GM12878 (cell line): ENCODE measurements at regions of chr1 and their contacts with region 1.

Region 1: DNA sequence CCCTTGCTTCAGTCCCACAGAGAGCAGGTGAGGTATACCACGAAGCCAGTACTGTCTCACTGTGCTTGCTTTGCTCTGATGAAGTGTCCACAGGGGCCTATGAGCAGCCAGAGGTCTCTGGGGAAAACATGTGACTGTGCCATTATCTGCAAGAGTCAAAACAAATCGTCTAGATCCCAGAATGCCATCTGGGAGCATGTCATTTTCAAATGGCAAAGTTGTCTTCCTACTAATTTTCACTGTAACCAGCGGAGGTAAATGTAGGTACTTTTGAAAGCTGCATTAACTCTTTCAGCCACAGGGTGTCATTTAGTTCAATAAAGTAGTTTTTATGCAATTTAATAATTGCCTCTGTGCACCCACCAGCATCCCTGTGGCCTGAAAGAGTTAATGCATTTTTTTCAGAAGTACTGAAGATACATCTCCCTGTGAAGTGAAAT is 173.6 kb upstream of the SGIP1 start:
- DNase-seq: no peak
- ATAC-seq: peak; percentile 51
- H3K4me3 ChIP-seq: no peak overlapping the region
- H3K27ac ChIP-seq: no peak overlapping the region
- H3K4me1 ChIP-seq: peaks cover 16% of the 10 kb centered on the region
- H3K27me3 ChIP-seq: no peaks in the 10 kb centered on the region
- CTCF ChIP-seq: peak; percentile 30 to 44 (median 37); a peak in 4 of 6 replicates
- EP300 ChIP-seq: no peak
- POLR2A ChIP-seq: no peak
- RAD21 ChIP-seq: peak; percentile 59

Region 2: DNA sequence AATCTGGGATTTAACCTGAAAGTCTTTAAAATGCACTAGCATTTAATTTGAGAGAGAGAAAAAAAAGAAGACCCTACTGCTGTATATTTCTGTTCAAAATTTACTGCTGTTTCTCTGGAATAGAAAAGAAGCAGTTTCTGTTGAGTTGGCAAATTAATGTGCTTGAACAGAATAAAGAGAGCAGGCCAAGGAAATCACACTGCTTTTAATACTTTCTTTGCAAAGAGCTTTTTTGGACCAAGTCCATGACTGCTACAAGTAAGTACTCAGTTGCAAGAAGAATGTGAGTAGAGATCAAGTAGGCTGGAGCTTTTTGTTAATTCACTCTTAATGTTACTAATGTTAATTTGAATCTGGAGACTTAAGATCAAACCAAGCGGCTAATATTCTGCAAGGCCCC is 162.5 kb before region 1 on chr1:
- CTCF ChIA-PET with region 1: no interaction called
- POLR2A ChIA-PET with region 1: no interaction called
- RAD21 ChIA-PET with region 1: no interaction called
- SMC1A ChIA-PET with region 1: no interaction called
- in situ Hi-C with region 1: no loop called
- intact Hi-C with region 1: no loop called
- DNase-seq: no peak
- ATAC-seq: no peak
- H3K4me3 ChIP-seq: no peak overlapping the region
- H3K27ac ChIP-seq: no peak overlapping the region
- H3K4me1 ChIP-seq: no peaks in the 10 kb centered on the region
- H3K27me3 ChIP-seq: no peaks in the 10 kb centered on the region
- CTCF ChIP-seq: no peak
- EP300 ChIP-seq: no peak
- POLR2A ChIP-seq: no peak
- RAD21 ChIP-seq: no peak

Region 3: GRCh38 chr1:66262211-66262963 is 97.9 kb before region 1 on chr1:
- CTCF ChIA-PET with region 1: no interaction called
- POLR2A ChIA-PET with region 1: no interaction called
- RAD21 ChIA-PET with region 1: interaction called, 3 read pairs
- SMC1A ChIA-PET with region 1: interaction called, 11 read pairs
- in situ Hi-C with region 1: no loop called
- intact Hi-C with region 1: no loop called
- DNase-seq: no peak
- ATAC-seq: no peak
- H3K4me3 ChIP-seq: no peak overlapping the region
- H3K27ac ChIP-seq: no peak overlapping the region
- H3K4me1 ChIP-seq: peaks cover 4% of the 10 kb centered on the region; the same call in 1 of the 2 replicates
- H3K27me3 ChIP-seq: no peaks in the 10 kb centered on the region
- CTCF ChIP-seq: no peak
- EP300 ChIP-seq: no peak
- POLR2A ChIP-seq: no peak
- RAD21 ChIP-seq: no peak

Region 4: GRCh38 chr1:68128157-68128556 is 1767.9 kb after region 1 on chr1:
- CTCF ChIA-PET with region 1: no interaction called
- POLR2A ChIA-PET with region 1: no interaction called
- RAD21 ChIA-PET with region 1: no interaction called
- SMC1A ChIA-PET with region 1: no interaction called
- in situ Hi-C with region 1: no loop called
- intact Hi-C with region 1: no loop called
- DNase-seq: peak; percentile 5
- ATAC-seq: peak; percentile 67
- H3K4me3 ChIP-seq: no peak overlapping the region
- H3K27ac ChIP-seq: no peak overlapping the region
- H3K4me1 ChIP-seq: no peaks in the 10 kb centered on the region; the same call in 1 of the 2 replicates
- H3K27me3 ChIP-seq: no peaks in the 10 kb centered on the region
- CTCF ChIP-seq: no peak
- EP300 ChIP-seq: no peak
- POLR2A ChIP-seq: no peak
- RAD21 ChIP-seq: no peak